AG04450 (cell line): ENCODE measurements at regions of chr6 and their contacts with region 1.

Region 1: DNA sequence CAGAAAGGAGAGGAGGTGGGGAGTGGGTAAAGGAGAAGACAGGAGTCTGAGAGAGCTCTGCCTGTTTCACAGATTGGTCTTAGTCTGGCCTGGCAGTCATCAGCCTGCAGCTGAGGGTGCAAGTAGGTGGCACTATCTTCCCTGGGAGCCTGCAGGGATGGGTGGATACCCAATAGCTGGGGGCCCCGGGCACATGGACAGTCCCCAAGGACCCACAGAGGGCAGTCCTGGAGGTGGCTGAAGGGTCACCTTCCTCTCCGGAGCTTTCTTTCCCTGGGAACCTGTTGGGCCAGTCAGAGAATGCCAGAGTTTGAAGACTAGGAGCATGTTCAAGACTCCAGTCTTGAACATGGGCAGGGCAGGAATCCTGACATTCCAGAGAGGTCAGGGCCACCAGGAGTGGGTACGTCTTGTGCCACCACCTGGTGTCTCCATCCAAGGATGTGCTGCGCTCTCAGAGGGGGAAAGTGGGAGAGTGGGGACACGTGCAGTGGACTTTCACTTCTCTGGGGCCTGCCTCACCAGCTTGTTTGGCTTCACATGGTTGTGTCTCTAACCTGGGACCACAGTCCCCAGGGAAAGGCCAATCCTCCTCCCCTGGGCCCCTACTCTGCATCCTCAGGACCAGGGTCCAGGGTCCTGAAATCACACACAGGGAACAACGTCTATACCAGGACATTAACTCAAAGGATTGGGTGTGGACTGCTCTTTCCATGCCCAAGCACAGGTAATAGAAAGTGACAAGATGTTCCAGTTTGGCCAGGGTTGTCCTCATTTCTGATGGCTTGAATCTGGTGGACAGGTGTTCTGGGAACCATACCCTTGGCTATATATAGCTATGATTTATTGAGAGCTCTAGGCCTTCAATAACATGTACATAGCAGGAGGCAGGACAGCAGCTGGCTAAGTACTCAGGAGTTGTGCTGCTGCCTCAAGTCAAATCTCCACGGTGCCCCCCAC is 18.0 kb downstream of the AARS2 start:
- DNase-seq: no peak
- H3K4me3 ChIP-seq: no peak overlapping the region
- H3K27ac ChIP-seq: no peak overlapping the region
- H3K27me3 ChIP-seq: peaks cover 62% of the 10 kb centered on the region
- CTCF ChIP-seq: no peak

Region 2: GRCh38 chr6:44312901-44313788 is 18.0 kb after region 1 on chr6 and contains the start of gene AARS2:
- CTCF ChIA-PET with region 1: interaction called, 12 read pairs
- POLR2A ChIA-PET with region 1: no interaction called
- DNase-seq: peak; percentile 38
- H3K4me3 ChIP-seq: peak within 1 kb of the TSS; percentile 82
- H3K27ac ChIP-seq: no peak within 1 kb of the TSS
- H3K27me3 ChIP-seq: peaks cover 5% of the 10 kb centered on the region
- CTCF ChIP-seq: peak; percentile 99
- polyA plus RNA-seq, gene AARS2: 5.8 and 6.2 TPM in 2 replicates